Esophagus muscularis mucosa (tissue), 4 donors: ENCODE measurements at regions of chr15 and their contacts with region 1.

Region 1: DNA sequence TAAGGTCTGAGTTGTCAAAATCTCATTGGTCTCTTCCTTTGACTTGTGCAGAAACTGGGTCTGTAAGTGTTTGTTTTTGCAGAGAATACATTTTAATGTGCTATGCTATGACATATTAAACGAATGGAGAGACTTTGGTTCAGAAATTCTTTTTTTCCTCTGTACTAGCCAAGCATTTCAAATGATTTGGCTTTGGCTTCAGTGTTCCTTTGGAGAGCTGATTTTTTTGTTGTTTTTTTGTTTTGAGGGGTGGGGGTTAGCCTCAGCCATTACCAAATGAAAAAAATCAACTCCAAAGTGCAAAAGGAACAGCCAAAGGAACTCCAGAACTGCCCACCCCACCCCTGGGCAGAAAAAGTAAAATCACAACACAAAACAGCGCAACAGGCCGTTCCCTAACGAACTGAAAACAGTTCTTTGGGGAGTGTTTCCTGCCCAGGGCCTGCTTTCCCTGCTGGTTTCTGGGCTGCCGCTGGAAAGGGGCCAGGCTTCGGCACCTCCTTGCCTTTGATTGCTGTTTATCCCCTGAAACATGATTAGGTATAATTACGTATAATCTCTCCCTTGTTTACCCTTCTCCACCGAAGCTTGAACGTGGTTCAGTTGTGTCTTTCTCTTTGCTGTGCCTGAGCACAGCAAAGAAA is 57.6 kb upstream of the NEO1 start:
- DNase-seq: no peak
- H3K4me3 ChIP-seq: no peak overlapping the region
- H3K27ac ChIP-seq: peak overlapping the region in 3 of 4 donors; percentile 5 to 55 (median 50)
- H3K4me1 ChIP-seq: peaks cover 12 to 42% (median 40%) of the 10 kb centered on the region in 4 donors
- H3K27me3 ChIP-seq: no peaks in the 10 kb centered on the region
- CTCF ChIP-seq: no peak
- EP300 ChIP-seq: no peak
- POLR2A ChIP-seq: no peak

Region 2: GRCh38 chr15:73051811-73052678 is 57.4 kb after region 1 on chr15 and contains the start of gene NEO1:
- intact Hi-C with region 1: loop called (anchors 5 kb)
- DNase-seq: peak; percentile 93
- H3K4me3 ChIP-seq: peak within 1 kb of the TSS; percentile 74 to 95 (median 84)
- H3K27ac ChIP-seq: peak within 1 kb of the TSS; percentile 89 to 97 (median 95)
- H3K4me1 ChIP-seq: peaks cover 10 to 49% (median 33%) of the 10 kb centered on the region in 4 donors
- H3K27me3 ChIP-seq: no peaks in the 10 kb centered on the region
- CTCF ChIP-seq: no peak
- EP300 ChIP-seq: no peak
- POLR2A ChIP-seq: no peak
- total RNA-seq, gene NEO1: 38.2 to 61.2 (median 53.5) TPM